ENCODE measurements at regions of chr10 and their contacts with region 1.

Region 1: DNA sequence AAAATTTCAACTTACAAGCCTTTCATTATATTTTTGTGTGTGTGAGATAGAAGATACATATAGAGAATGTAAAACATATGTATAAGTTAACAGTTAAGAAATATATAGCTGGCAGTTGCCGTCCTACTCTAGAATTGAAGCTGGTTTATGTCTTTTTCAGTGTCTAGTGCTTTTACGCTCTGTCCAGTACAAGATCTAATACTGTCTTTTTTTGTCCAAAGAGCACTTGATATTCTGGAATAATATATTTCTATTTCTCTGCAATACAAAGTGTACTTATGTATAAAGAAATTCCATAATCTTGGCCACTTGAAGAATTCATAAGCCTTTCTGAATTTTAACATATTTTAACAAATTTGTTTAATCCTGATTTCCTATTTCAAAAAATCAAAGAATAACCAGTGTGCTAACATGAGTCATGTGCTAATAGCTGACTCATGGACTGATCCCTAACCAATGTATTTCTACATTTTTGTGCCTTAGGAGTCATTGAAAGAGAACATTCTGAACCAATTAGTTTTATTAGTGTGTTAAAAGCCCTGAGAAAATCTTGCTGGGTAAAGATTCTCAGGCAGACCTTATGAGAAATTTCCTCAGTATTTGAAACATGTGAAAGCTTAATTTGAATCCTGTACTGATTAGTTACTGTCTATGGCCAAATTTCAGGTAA is 73.2 kb upstream of the CCAR1 start:
- DNase-seq: no peak
- ATAC-seq: no peak
- H3K4me3 ChIP-seq: no peak overlapping the region
- H3K27ac ChIP-seq: no peak overlapping the region
- H3K4me1 ChIP-seq: no peaks in the 10 kb centered on the region
- H3K27me3 ChIP-seq: no peaks in the 10 kb centered on the region
- CTCF ChIP-seq: no peak

Region 2: GRCh38 chr10:67549390-67549789 is 1098.4 kb before region 1 on chr10:
- CTCF ChIA-PET with region 1: no interaction called
- POLR2A ChIA-PET with region 1: no interaction called
- in situ Hi-C with region 1: no loop called
- intact Hi-C with region 1: no loop called
- DNase-seq: no peak
- ATAC-seq: no peak
- H3K4me3 ChIP-seq: no peak overlapping the region
- H3K27ac ChIP-seq: no peak overlapping the region
- H3K4me1 ChIP-seq: no peaks in the 10 kb centered on the region
- H3K27me3 ChIP-seq: no peaks in the 10 kb centered on the region
- CTCF ChIP-seq: no peak

Region 3: DNA sequence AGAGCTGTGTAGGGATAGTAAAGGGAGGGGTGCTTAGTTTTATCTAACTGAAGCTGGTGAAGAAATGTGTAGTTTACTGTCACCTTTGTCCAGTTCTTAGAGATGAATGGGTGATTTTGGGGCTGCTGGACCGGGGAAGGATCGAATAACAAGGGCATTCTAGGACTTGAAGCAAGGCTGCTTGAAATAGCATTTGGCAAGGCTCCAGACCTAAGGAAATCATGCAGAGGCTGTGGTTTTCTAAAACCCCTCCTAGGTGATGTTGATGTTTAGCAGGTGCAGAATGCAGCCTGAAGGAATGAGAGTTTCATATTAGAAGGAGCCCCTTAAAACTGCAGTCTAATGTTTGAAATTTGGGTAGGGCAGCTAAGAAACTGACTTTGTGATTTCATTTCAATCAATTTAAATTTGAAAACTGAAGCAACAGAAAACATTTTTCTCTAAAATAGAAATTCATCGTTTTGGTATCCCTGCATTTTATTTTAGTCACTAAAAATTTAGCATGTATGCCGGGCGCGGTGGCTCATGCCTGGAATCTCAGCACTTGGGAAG is 19.2 kb before region 1 on chr10:
- CTCF ChIA-PET with region 1: no interaction called
- POLR2A ChIA-PET with region 1: interaction called, 10 read pairs
- in situ Hi-C with region 1: no loop called
- intact Hi-C with region 1: no loop called
- DNase-seq: no peak
- ATAC-seq: no peak
- H3K4me3 ChIP-seq: no peak overlapping the region
- H3K27ac ChIP-seq: no peak overlapping the region
- H3K4me1 ChIP-seq: peaks cover 4% of the 10 kb centered on the region
- H3K27me3 ChIP-seq: no peaks in the 10 kb centered on the region
- CTCF ChIP-seq: no peak

Region 4: GRCh38 chr10:69577268-69578232 is 929.7 kb after region 1 on chr10:
- CTCF ChIA-PET with region 1: no interaction called
- POLR2A ChIA-PET with region 1: no interaction called
- in situ Hi-C with region 1: no loop called
- intact Hi-C with region 1: no loop called
- DNase-seq: no peak
- ATAC-seq: no peak
- H3K4me3 ChIP-seq: no peak overlapping the region
- H3K27ac ChIP-seq: no peak overlapping the region
- H3K4me1 ChIP-seq: peaks cover 20% of the 10 kb centered on the region
- H3K27me3 ChIP-seq: peaks cover 60% of the 10 kb centered on the region
- CTCF ChIP-seq: no peak